HEK293T (cell line): ENCODE measurements at regions of chr6 and their contacts with region 1.

Region 1: DNA sequence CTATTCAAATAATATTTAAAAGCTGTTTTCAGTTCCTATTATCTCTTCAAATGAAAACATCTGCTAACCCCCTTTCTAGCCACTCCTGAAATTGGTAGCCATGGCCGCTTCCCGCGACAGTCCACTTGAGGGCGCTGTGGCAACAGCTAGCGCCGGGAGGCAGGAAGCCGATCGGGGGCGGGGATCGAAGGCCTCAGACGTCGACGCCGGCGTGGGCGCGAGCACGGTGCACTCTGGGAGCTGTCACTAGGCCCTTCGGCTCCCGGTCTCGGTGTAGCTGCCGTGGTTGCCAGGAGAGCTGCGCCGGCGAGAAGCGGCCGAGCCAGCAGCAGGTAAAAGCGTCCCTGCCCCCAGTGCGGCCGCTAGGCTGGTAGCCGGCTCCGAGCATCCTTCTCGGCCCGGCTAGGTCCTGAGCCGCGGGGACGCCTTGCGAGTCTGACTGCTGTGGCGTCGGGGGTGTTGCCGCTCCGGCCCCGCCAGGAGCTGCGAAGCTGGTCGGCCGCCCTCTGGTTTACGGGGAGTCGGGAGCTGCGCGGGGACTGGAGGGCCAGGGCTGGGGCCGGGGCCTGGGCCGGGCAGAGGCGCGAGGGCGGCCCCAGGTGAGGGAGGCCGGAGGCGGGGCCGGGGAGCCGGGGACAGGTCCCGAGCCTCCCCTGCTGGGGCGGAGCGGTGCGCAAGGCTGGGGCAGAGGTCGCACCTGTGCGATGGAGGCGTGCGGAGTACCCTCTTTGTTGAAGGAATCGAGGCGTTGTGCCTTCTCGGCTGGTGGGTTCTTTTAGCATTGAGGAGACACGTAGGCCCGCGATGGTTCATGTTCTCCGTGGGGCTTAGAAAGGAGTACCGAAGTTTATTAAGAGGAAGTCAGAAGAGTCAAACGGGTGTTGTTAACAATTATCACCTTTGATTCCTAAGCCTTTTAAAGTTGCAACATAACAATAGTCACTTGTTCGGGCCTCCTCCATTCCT is at the start of gene DOP1A:
- DNase-seq: peak; percentile 84

Region 2: DNA sequence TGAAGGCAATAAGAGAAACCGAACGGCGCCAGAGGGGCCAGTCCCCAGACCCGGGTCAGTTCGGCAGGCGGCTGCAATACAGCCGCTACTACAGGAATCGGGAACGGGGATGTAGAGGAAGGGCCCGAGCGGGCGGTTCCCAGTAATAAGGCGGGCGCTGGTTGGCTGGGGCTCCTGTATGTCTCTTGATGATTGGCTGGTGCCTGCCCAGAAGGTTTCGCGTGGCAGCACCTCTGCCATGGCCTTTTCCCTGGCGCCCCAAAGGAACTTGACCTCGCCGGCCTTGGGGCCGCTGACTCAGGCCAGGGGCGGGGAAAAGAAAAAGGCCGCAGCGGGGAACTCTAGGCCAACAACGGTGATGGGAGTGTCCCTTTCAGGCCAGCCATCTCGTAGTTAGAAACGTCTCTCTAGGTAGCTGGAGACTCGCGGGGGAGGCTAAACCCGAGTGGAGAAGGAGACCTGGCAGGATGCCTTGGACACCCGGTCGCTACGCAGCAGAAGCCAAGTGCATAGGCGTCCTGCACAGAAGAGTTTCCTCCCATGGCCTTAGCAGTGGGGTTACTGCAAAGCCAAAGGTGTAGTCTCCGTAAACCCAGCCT is 820.0 kb before region 1 on chr6 and contains the start of gene IBTK:
- CTCF ChIA-PET with region 1: interaction called, 11 read pairs
- POLR2A ChIA-PET with region 1: interaction called, 16 read pairs
- DNase-seq: peak; percentile 90

Region 3: DNA sequence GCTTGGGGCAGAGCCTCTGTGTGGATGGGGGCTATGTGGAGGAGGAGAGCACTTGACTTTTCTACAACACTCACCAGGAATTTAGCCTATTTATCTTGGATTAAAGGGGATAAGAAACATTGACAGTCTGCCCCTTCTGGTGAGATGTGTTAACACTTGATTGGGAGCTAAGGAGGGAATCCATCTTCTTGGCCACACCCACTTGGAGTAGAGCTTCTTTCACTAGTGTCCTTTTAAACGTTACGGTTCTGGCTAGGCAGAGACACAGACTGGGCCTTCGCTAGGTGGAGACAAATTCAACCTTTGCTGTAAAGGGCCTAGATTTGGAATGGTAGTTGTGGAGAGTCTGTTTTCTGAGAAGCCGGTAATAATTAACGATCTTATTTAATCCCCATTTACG is 719.6 kb before region 1 on chr6:
- CTCF ChIA-PET with region 1: no interaction called
- POLR2A ChIA-PET with region 1: no interaction called
- DNase-seq: no peak

Region 4: DNA sequence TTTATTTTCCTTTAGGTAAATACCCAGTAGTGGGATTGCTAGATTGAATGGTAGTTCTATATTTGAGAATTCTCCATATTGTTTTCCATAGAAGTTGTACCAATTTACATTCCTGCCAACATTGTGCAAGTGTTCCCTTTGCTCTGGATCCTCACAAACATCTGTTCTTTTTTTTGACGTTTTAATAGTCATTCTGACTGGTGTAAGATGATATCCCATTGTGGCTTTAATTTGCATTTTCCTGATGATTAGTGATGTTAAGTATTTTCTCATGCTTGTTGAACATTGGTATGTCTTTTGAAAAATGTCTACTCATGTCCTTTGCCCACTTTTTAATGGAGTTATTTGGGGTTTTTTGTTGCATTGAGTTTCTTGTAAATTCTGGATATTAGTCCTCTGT is 87.6 kb before region 1 on chr6:
- CTCF ChIA-PET with region 1: no interaction called
- POLR2A ChIA-PET with region 1: no interaction called
- DNase-seq: no peak

Region 5: GRCh38 chr6:83215131-83216047 is 147.7 kb after region 1 on chr6:
- CTCF ChIA-PET with region 1: interaction called, 55 read pairs
- POLR2A ChIA-PET with region 1: interaction called, 10 read pairs
- DNase-seq: peak; percentile 56

Region 6: GRCh38 chr6:83221889-83222479 is 154.3 kb after region 1 on chr6:
- CTCF ChIA-PET with region 1: interaction called, 55 read pairs
- POLR2A ChIA-PET with region 1: no interaction called
- DNase-seq: peak; percentile 9

Region 7: DNA sequence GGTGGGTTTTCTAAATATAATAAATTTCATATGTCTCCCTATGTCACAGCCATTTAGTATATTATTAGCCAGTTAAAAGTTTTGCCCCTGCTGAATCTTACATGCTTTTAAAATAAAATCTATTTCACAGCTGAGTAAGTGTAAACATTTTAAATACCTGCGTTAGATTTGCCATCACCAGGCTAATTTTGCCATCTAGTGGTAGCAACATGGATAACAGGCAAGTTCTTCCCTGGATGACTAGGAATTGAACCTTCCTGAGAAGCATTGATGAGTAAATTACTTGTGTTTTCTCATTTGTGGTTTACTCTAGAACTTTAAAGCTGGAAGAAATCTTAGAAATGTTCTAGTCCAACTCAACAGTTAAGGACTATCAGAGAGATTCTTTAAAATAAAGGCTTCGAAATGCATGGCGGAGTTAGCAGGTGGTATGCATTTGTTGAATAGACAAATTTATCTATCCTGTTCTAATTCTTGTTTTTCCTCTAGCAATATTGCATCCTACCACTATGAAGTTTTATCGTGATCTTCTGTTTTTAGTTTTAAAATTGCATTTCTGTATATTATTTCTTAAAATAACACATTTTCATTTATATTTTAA is 447.2 kb after region 1 on chr6:
- CTCF ChIA-PET with region 1: interaction called, 51 read pairs
- POLR2A ChIA-PET with region 1: interaction called, 3 read pairs
- DNase-seq: peak; percentile 40